ENCODE measurements at regions of chr21 and their contacts with region 1.

Region 1: DNA sequence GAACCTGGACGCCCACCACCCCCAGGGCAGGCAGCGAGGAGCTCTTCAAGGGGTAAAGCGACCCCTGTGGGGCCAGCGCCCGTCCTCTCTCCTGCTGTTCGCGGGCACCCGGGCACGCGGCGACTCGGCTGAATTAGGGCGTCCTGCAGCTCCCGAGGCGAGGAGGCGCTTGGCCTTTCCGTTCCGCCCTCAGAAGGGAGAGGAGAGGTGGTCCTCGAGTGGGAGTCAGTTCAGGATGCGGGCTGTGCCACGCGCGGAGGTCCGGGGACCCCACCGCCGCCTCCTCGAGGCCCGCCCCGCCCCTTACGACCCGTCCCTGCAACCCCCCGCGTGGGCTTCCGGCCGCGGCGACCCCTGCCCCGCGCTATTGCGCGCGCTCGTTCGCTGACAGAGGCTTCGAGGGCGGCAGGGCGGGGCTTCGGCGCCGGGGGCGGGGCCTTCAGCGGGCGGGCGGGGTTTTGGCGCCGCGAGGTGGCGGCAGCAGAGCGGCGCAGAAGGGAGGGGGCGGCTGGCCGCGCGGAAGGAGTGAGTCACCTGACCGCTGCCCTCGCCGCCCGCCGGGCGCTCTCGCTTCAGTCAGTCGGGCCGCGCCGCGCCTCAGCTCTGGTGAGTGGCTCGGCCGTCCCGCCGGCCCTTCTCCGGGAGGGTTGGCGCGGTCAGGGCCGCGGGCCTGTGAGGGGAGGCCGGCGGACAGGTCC is at the start of gene BACH1:
- DNase-seq: peak; percentile 92
- ATAC-seq: peak; percentile 53
- H3K4me3 ChIP-seq: peak within 1 kb of the TSS; percentile 69 to 99 (median 73)
- H3K4me3 Mint-ChIP-seq: peak within 1 kb of the TSS; percentile 97
- H3K27ac ChIP-seq: peak within 1 kb of the TSS; percentile 87 to 89
- H3K27ac Mint-ChIP-seq: peak within 1 kb of the TSS; percentile 97
- H3K4me1 ChIP-seq: peaks cover 59 to 62% of the 10 kb centered on the region in 2 donors
- H3K4me1 Mint-ChIP-seq: peaks cover 69% of the 10 kb centered on the region
- H3K27me3 ChIP-seq: no peaks in the 10 kb centered on the region
- H3K27me3 Mint-ChIP-seq: no peaks in the 10 kb centered on the region
- CTCF ChIP-seq: peak; percentile 46
- total RNA-seq, gene BACH1: 221 and 238 TPM in 2 replicates

Region 2: GRCh38 chr21:28884976-28885852 is 413.3 kb before region 1 on chr21:
- CTCF ChIA-PET with region 1: no interaction called
- POLR2A ChIA-PET with region 1: no interaction called
- intact Hi-C with region 1: loop called (anchors 10 kb)
- DNase-seq: peak; percentile 97
- ATAC-seq: peak; percentile 92
- H3K4me3 ChIP-seq: peak overlapping the region; percentile 56 to 94 (median 79)
- H3K4me3 Mint-ChIP-seq: peak overlapping the region; percentile 94
- H3K27ac ChIP-seq: peak overlapping the region; percentile 84 to 85
- H3K27ac Mint-ChIP-seq: peak overlapping the region; percentile 98
- H3K4me1 ChIP-seq: peaks cover 6 to 15% of the 10 kb centered on the region in 2 donors
- H3K4me1 Mint-ChIP-seq: peaks cover 20% of the 10 kb centered on the region
- H3K27me3 ChIP-seq: peaks cover 0 to 2% (median 0%) of the 10 kb centered on the region in 4 experiments
- H3K27me3 Mint-ChIP-seq: peaks cover 7% of the 10 kb centered on the region
- CTCF ChIP-seq: no peak

Region 3: GRCh38 chr21:29024474-29025327 is 273.8 kb before region 1 on chr21 and contains the start of gene USP16:
- CTCF ChIA-PET with region 1: no interaction called
- POLR2A ChIA-PET with region 1: interaction called, 4 read pairs
- intact Hi-C with region 1: loop called (anchors 1 kb)
- DNase-seq: peak; percentile 99
- ATAC-seq: peak; percentile 93
- H3K4me3 ChIP-seq: peak within 1 kb of the TSS; percentile 58 to 90 (median 74)
- H3K4me3 Mint-ChIP-seq: peak within 1 kb of the TSS; percentile 95
- H3K27ac ChIP-seq: peak within 1 kb of the TSS; percentile 97 to 98
- H3K27ac Mint-ChIP-seq: peak within 1 kb of the TSS; percentile 99
- H3K4me1 ChIP-seq: peaks cover 16 to 17% of the 10 kb centered on the region in 2 donors
- H3K4me1 Mint-ChIP-seq: peaks cover 40% of the 10 kb centered on the region
- H3K27me3 ChIP-seq: no peaks in the 10 kb centered on the region
- H3K27me3 Mint-ChIP-seq: no peaks in the 10 kb centered on the region
- CTCF ChIP-seq: no peak
- total RNA-seq, gene USP16: 54.7 and 55.7 TPM in 2 replicates

Region 4: GRCh38 chr21:29195981-29196669 is 102.4 kb before region 1 on chr21:
- CTCF ChIA-PET with region 1: interaction called, 7 read pairs
- POLR2A ChIA-PET with region 1: interaction called, 4 read pairs
- intact Hi-C with region 1: loop called (anchors 1 kb)
- DNase-seq: peak; percentile 92
- ATAC-seq: peak; percentile 97
- H3K4me3 ChIP-seq: peak overlapping the region; percentile 13 to 67 (median 36)
- H3K4me3 Mint-ChIP-seq: peak overlapping the region; percentile 79
- H3K27ac ChIP-seq: peak overlapping the region; percentile 72 to 87
- H3K27ac Mint-ChIP-seq: peak overlapping the region; percentile 94
- H3K4me1 ChIP-seq: peaks cover 17 to 22% of the 10 kb centered on the region in 2 donors
- H3K4me1 Mint-ChIP-seq: peaks cover 39% of the 10 kb centered on the region
- H3K27me3 ChIP-seq: no peaks in the 10 kb centered on the region
- H3K27me3 Mint-ChIP-seq: no peaks in the 10 kb centered on the region
- CTCF ChIP-seq: peak; percentile 75

Region 5: GRCh38 chr21:29318354-29318753 is 19.9 kb after region 1 on chr21:
- CTCF ChIA-PET with region 1: no interaction called
- POLR2A ChIA-PET with region 1: interaction called, 3 read pairs
- intact Hi-C with region 1: loop called (anchors 2 kb)
- DNase-seq: no peak
- ATAC-seq: no peak
- H3K4me3 ChIP-seq: no peak overlapping the region
- H3K4me3 Mint-ChIP-seq: no peak overlapping the region
- H3K27ac ChIP-seq: no peak overlapping the region
- H3K27ac Mint-ChIP-seq: no peak overlapping the region
- H3K4me1 ChIP-seq: peaks cover 6 to 14% of the 10 kb centered on the region in 2 donors
- H3K4me1 Mint-ChIP-seq: peaks cover 66% of the 10 kb centered on the region
- H3K27me3 ChIP-seq: no peaks in the 10 kb centered on the region
- H3K27me3 Mint-ChIP-seq: no peaks in the 10 kb centered on the region
- CTCF ChIP-seq: no peak